Motor neuron (in vitro differentiated cells): ENCODE measurements at regions of chr5 and their contacts with region 1.

Region 1: DNA sequence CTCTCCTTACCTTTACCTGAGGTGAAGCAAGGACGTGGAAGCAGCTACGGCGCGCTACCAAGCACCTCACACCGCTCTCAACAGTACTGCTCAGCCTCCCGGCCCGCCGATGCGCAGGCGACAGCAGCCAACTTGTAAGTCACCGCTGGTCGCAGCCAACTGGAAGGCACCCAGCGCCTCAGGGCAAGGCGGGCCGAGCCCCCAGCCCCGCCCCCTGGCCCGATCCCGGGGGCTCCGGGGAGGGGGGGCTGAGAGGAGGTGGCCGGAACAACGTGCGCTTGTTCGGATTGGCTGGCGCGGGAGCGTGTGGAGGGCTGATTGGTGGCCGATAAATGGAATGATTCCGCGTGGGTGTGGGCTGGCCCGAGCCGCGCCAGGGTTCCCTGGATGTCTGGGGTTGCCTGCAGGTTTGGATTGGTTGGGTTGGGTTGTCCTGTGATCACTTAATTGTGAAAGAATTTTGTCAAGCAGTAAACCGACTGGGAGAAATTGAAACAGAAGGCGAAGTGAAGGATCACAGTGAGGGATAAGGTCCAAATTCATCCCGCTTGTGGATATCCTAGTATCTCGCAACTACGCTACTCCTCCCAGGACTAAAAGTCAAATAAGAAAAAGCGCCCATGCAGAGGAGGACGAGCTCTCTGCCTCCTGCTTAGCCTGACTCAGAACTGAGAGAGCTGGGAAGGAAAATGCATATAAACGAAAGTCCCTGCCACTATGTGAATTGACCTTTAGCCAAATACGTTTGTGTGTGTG is at the start of gene STARD4:
- ATAC-seq: peak; percentile 94 to 97 (median 96)
- H3K4me3 ChIP-seq: peak within 1 kb of the TSS; percentile 61 to 82 (median 77)
- H3K27ac ChIP-seq: peak within 1 kb of the TSS; percentile 50 to 63
- H3K4me1 ChIP-seq: peaks cover 12 to 25% of the 10 kb centered on the region in 2 donors
- total RNA-seq, gene STARD4: 17.0 to 68.5 (median 37.9) TPM

Region 2: GRCh38 chr5:112160652-112161391 is 648.3 kb after region 1 on chr5:
- in situ Hi-C with region 1: loop called in 1 of 9 experiments (anchors 25 kb)
- ATAC-seq: peak; percentile 85 to 95 (median 94)
- H3K4me3 ChIP-seq: peak overlapping the region; percentile 76 to 96 (median 94)
- H3K27ac ChIP-seq: peak overlapping the region; percentile 84 to 85
- H3K4me1 ChIP-seq: peaks cover 0 to 10% of the 10 kb centered on the region in 2 donors